GM18951 (cell line): ENCODE measurements at regions of chr11 and their contacts with region 1.

Region 1: GRCh38 chr11:58524232-58525036 is 16.5 kb upstream of the OR5B21 start:
- POLR2A ChIP-seq: no peak

Region 2: DNA sequence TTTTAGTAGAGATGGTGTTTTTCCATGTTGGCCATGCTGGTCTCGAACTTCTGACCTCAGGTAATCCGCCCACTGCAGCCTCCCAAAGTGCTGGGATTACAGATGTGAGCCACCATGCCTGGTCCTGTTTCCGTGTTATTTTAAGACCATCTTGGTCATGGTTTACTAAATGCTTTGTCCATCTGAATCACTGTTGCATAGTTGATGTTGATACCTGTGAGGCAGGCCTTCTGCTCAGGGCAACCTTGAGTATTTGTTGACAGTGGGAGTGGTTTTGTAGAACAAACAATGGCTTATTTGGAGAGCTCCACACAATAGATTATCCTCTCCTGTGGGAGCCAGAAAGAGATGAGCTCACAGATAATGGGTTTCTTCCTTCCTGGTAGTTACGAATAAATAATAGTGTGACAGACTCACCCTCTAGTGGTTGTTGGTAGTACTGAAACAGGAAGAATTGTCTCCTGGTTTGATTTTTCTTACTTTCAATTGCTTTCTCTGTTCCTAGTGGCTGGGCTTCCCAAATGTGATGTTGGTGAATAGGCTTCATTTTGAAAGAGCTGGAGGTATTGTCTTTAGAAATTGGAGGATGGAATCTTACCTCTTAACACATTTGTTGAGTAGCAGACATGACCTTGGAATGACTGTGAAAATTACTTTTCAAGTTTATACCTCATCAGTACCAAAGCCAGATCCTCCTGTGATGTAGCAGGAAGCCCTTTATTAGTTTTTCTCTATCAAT is 723.8 kb before region 1 on chr11:
- in situ Hi-C with region 1: loop called (anchors 25 kb)
- POLR2A ChIP-seq: no peak

Region 3: GRCh38 chr11:58097437-58097836 is 427.0 kb before region 1 on chr11:
- in situ Hi-C with region 1: no loop called
- POLR2A ChIP-seq: no peak

Region 4: DNA sequence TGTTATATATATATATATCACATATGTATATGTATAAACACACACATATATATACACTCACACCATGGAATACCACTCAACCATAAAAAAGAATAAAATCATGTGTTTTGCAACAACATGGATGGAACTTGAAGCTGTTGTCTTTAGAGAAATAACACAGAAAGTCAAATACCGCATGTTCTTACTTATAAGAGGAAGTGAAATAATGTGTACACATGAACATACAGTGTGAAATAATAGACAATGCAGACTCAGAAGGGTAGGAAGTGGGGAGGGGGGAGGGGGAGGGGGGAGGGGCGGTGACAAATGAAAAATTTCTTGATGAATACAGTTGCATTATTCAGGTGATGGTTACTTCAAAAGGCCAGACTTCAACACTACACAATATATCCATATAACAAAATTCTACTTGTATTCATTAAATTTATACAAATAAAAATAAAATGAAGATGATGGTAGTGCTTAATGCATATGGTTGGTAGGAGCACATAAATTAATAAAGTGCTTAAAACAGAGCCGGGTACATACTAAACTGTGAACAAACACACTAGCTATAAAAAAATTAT is 90.7 kb before region 1 on chr11:
- in situ Hi-C with region 1: no loop called
- POLR2A ChIP-seq: no peak